Right ventricle myocardium superior (tissue), 1 donor: ENCODE measurements at regions of chrX and their contacts with region 1.

Region 1: DNA sequence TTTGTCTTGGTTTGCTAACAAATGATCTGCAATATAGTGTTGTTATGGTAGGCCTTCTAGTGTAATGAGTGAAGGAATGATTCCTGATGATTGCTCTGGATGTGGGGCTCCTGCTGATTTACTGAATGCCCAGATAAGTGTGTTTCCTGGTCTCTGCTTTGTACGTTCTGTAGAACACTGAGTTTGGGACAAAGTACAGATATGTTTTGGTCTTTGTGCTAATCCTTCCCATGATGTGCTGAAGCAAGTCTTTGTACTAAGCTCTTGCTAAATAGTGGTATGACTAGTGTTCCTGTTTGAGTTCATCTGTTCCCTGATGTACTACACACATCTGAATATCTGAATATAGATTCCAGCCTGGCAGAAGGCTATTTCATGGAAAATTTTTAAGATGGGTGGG is 36.9 kb upstream of the XIAP start:
- DNase-seq: no peak
- ATAC-seq: no peak

Region 2: GRCh38 chrX:123673813-123674212 is 149.2 kb before region 1 on chrX:
- intact Hi-C with region 1: no loop called
- DNase-seq: no peak
- ATAC-seq: no peak

Region 3: GRCh38 chrX:123779908-123780396 is 43.0 kb before region 1 on chrX:
- intact Hi-C with region 1: no loop called
- DNase-seq: no peak
- ATAC-seq: no peak

Region 4: DNA sequence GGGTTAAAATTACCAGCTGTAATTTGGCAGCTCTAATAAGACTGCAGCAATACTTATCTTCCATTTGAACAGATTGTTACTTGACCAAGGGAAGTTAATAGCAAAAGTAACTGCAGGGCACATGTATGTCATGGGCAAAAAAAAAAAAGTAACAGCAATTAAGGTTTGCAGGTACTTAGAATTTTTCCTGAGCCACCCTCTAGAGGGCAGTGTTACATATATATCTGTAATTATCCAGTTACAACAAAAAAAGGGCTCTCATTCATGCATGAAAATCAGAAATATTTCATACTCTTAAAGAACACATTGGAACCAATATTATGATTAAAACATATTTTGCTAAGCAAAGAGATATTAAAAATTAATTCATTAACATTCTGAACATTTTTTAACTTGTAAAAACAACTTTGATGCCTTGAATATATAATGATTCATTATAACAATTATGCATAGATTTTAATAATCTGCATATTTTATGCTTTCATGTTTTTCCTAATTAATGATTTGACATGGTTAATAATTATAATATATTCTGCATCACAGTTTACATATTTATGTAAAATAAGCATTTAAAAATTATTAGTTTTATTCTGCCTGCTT is 61.9 kb after region 1 on chrX:
- intact Hi-C with region 1: loop called (anchors 10 kb)
- DNase-seq: no peak
- ATAC-seq: no peak